Prostate gland (tissue), 2 donors: ENCODE measurements at regions of chr11 and their contacts with region 1.

Region 1: DNA sequence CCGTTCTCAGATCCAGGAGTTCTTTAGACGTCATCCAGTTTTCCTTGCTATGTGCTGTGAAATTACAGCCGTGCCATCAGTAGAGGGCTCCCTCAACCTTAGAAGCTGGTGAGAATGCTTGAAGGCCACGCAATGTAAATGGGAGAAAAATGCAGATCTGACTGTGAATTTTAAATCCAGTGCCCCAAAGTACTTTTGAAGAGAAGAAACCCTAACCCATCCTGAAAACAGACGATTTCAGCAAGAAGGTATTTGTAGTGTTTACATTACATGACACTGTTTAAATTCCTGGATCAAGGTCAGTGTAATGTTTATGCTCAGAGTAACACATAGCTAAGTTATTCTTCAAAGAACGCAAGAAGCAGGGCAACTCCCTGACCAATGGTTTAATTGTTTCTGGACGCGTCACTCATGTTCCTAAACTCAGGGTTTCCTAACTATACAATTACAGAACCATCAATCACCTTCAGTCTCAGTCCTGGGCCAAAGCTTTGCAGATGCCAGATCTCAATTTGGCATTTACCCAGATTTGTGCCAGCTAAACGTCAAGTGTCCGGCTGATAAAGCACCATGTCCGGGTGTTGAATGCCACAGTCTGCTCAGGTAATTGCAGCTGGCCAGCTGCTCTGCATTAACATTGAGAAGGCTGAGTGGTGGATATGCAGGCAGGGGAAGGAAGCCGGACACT is 38.2 kb downstream of the ADAMTS8 start:
- DNase-seq: no peak
- H3K4me3 ChIP-seq: no peak overlapping the region
- H3K27ac ChIP-seq: no peak overlapping the region
- H3K4me1 ChIP-seq: no peaks in the 10 kb centered on the region
- H3K27me3 ChIP-seq: no peaks in the 10 kb centered on the region
- CTCF ChIP-seq: peak in 2 of 4 experiments; percentile 18 to 20
- POLR2A ChIP-seq: no peak

Region 2: DNA sequence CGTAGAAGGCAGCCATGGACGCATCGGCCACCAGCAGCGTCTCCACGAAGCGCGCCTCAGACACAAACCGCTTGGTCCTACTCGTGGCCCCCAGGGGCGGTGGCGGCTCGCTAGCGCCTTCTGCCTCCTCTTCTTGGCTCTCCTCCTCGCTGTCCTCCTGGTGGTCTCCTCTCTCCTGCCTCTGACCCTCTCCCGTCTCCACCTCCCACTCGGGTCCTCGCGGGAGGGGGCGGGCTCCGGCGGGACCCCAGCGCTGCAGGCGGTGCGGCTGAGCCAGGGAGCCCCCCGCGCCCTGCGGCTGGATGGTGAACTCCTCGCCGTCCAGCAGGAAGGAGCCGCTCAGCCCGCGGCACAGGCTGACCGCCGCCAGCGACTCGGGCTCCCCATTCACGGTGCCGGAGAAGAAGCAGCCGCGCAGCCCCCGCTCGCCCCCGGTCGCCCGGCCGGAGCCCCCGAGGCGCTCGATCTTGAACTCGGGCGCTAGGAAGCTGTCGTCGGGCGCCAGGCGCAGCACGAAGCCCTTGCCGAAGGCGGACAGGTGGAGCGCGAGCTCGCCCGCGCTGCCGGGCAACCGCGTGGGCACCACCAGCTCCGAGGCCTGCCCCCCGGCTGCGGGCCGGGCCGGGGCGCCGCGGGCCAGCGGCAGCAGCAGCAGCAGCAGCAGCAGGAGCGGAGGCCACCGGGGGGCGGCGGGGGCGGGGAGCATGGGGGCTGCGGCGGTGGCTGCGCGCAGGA is 37.5 kb after region 1 on chr11:
- intact Hi-C with region 1: loop called (anchors 2 kb)
- DNase-seq: no peak
- H3K4me3 ChIP-seq: peak overlapping the region; percentile 21 to 33
- H3K27ac ChIP-seq: no peak overlapping the region
- H3K4me1 ChIP-seq: peaks cover 6% of the 10 kb centered on the region
- H3K27me3 ChIP-seq: peaks cover 5% of the 10 kb centered on the region
- CTCF ChIP-seq: peak in 1 of 4 experiments; percentile 34
- POLR2A ChIP-seq: no peak